GM10248 (cell line): ENCODE measurements at regions of chr6 and their contacts with region 1.

Region 1: GRCh38 chr6:118683881-118684872 is 32.8 kb upstream of the CEP85L start:
- DNase-seq: no peak
- CTCF ChIP-seq: no peak

Region 2: DNA sequence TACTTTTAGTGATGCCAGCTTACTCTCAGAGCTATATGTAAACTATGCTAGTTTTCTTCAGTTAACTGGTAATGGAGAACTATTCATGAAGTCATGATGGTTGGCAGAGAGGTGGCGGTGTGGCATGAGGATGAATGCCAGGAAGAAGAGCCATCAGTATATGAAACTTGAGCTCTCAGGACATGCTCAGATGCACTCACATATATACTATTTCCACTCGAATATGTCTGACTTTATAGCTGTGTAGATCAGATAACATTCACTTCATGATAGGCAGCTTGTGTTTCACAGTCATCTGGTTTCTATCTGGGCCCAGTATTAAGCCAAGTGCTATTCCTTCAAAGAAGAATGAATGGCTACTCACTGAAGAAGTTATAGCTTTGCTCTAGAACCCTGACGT is 13.4 kb after region 1 on chr6:
- CTCF ChIA-PET with region 1: interaction called, 17 read pairs
- POLR2A ChIA-PET with region 1: interaction called, 3 read pairs
- DNase-seq: no peak
- CTCF ChIP-seq: no peak

Region 3: DNA sequence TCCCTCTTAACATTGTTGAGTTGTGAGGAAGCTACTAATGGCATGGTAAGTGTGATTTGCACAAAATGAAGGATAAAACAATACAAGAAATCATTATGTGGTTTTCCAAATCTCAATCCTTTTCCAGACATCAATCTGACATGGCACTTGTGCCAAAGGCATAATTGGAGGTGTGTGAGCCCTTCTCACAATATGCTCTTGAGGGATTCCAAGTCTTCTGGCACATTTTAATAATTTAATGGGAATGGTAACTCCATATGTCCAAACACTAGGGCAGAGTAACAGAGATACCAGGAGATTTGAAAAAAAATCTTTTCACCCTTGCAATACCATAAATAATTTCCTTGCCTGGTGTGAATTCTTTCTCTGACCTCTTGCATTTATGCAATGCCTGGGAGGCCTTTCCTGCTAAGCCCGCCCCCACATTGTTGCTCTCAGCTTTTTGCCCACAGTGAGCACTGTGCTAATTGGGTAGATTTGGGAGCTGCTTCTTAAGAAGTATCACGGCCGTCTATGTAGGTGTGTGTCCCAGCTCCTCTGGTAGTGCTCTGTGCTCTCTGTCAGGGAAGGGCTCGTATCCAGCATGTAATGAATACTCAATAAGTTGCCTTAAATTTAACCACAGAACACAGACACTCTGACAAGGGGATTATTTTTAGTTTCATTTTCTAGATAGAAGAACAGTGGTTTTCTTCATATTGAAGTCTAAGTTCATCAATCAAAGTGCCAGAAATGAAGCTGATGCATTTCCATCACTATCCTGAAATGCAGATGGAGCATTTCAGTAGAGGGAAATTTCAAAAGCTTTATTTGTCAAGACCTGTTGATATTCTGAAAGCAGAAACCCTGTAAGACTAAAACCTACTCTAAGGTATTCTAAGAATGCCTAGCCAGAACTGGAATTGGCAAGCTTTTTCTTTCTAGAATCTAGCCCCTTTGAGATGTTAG is 21.6 kb after region 1 on chr6:
- CTCF ChIA-PET with region 1: interaction called, 11 read pairs
- POLR2A ChIA-PET with region 1: no interaction called
- DNase-seq: peak; percentile 32
- CTCF ChIP-seq: no peak